IMR-90 (cell line): ENCODE measurements at regions of chr12 and their contacts with region 1.

Region 1: DNA sequence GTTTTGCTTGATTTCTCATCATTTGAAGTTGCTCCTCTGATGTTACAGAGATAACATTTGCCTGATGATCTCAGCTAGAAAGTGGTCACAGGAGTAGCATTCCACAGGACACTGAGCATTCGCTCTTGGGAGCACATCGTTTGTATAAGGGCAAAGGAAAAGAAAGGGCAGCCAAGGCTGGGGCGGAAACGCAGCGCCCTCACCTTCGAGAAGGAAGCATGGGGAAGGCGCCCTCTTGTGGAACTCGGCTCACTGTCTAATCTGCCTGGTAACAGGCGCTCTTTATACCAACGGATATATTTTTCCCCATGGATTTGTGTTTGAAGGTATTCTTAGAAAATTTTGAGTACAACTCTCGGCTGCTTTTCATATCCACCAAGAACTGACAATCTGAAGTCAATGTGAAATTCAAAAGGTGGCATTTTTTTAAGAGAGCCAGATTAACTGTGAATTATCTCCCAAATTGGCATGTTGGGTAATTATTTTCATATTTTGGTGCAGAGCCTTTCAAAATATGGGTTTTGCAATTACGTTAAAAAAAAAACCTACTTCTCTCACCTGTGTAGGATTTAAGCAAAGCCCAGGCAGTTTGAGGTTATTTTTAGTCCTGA is 172.7 kb downstream of the CAND1 start:
- DNase-seq: peak; percentile 77
- ATAC-seq: peak; percentile 98
- H3K4me3 ChIP-seq: no peak overlapping the region
- H3K27ac ChIP-seq: no peak overlapping the region
- H3K4me1 ChIP-seq: no peaks in the 10 kb centered on the region
- H3K27me3 ChIP-seq: no peaks in the 10 kb centered on the region
- CTCF ChIP-seq: peak; percentile 92
- POLR2A ChIP-seq: no peak
- RAD21 ChIP-seq: peak; percentile 89

Region 2: GRCh38 chr12:67161322-67161918 is 280.4 kb before region 1 on chr12:
- CTCF ChIA-PET with region 1: no interaction called
- POLR2A ChIA-PET with region 1: no interaction called
- dilution Hi-C with region 1: no loop called
- in situ Hi-C with region 1: no loop called
- intact Hi-C with region 1: loop called (anchors 5 kb)
- DNase-seq: peak; percentile 39
- ATAC-seq: peak; percentile 75
- H3K4me3 ChIP-seq: no peak overlapping the region
- H3K27ac ChIP-seq: no peak overlapping the region
- H3K4me1 ChIP-seq: no peaks in the 10 kb centered on the region
- H3K27me3 ChIP-seq: no peaks in the 10 kb centered on the region
- CTCF ChIP-seq: peak; percentile 52
- POLR2A ChIP-seq: no peak
- RAD21 ChIP-seq: peak; percentile 43

Region 3: GRCh38 chr12:67426067-67426466 is 15.8 kb before region 1 on chr12:
- CTCF ChIA-PET with region 1: no interaction called
- POLR2A ChIA-PET with region 1: no interaction called
- dilution Hi-C with region 1: no loop called
- in situ Hi-C with region 1: no loop called
- intact Hi-C with region 1: no loop called
- DNase-seq: peak; percentile 80
- ATAC-seq: peak; percentile 80
- H3K4me3 ChIP-seq: no peak overlapping the region
- H3K27ac ChIP-seq: peak overlapping the region; percentile 27; the same call in 1 of the 2 replicates
- H3K4me1 ChIP-seq: peaks cover 6% of the 10 kb centered on the region
- H3K27me3 ChIP-seq: no peaks in the 10 kb centered on the region
- CTCF ChIP-seq: no peak
- POLR2A ChIP-seq: no peak
- RAD21 ChIP-seq: no peak

Region 4: GRCh38 chr12:67943226-67943892 is 501.5 kb after region 1 on chr12:
- CTCF ChIA-PET with region 1: interaction called, 4 read pairs
- POLR2A ChIA-PET with region 1: no interaction called
- dilution Hi-C with region 1: no loop called
- in situ Hi-C with region 1: loop called (anchors 10 kb)
- intact Hi-C with region 1: loop called (anchors 2 kb)
- DNase-seq: peak; percentile 74
- ATAC-seq: peak; percentile 93
- H3K4me3 ChIP-seq: no peak overlapping the region
- H3K27ac ChIP-seq: no peak overlapping the region
- H3K4me1 ChIP-seq: peaks cover 4% of the 10 kb centered on the region; the same call in 1 of the 2 replicates
- H3K27me3 ChIP-seq: peaks cover 2% of the 10 kb centered on the region; the same call in 1 of the 2 replicates
- CTCF ChIP-seq: peak; percentile 79
- POLR2A ChIP-seq: no peak
- RAD21 ChIP-seq: peak; percentile 80